Transverse colon (tissue), 4 donors: ENCODE measurements at regions of chr2 and their contacts with region 1.

Region 1: GRCh38 chr2:73071360-73072133 is at the start of gene SFXN5:
- DNase-seq: peak; percentile 99
- H3K4me3 ChIP-seq: peak within 1 kb of the TSS; percentile 70 to 94 (median 85)
- H3K27ac ChIP-seq: peak within 1 kb of the TSS; percentile 94 to 97 (median 96)
- H3K4me1 ChIP-seq: peaks cover 12 to 26% (median 20%) of the 10 kb centered on the region in 4 donors
- H3K27me3 ChIP-seq: no peaks in the 10 kb centered on the region
- CTCF ChIP-seq: peak in 3 of 5 experiments; percentile 28 to 47 (median 39)
- EP300 ChIP-seq: no peak
- POLR2A ChIP-seq: peak; percentile 82
- total RNA-seq, gene SFXN5: 12.3 to 98.4 (median 42.7) TPM

Region 2: DNA sequence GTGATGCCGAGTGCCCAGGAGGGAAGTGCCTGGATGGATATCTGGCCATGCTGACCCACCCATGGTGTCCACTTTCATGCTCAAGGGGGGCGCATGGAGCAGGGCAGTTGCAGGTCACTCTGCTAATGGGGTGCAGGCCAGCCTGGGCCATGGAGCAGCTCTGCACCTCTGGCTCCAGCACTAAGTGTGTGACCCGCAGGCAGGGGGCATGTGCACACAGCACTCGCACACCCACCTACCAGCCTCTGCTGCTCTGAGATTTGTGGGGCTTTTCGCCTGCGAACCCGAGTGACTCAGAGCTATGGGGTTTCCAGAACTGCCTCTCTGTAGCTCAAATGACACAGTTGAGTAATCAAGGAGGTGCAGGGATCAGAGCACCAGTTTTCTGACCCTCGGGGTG is 990.1 kb before region 1 on chr2:
- in situ Hi-C with region 1: no loop called
- intact Hi-C with region 1: no loop called
- DNase-seq: no peak
- H3K4me3 ChIP-seq: no peak overlapping the region
- H3K27ac ChIP-seq: no peak overlapping the region
- H3K4me1 ChIP-seq: no peaks in the 10 kb centered on the region
- H3K27me3 ChIP-seq: no peaks in the 10 kb centered on the region
- CTCF ChIP-seq: no peak
- EP300 ChIP-seq: no peak
- POLR2A ChIP-seq: no peak

Region 3: DNA sequence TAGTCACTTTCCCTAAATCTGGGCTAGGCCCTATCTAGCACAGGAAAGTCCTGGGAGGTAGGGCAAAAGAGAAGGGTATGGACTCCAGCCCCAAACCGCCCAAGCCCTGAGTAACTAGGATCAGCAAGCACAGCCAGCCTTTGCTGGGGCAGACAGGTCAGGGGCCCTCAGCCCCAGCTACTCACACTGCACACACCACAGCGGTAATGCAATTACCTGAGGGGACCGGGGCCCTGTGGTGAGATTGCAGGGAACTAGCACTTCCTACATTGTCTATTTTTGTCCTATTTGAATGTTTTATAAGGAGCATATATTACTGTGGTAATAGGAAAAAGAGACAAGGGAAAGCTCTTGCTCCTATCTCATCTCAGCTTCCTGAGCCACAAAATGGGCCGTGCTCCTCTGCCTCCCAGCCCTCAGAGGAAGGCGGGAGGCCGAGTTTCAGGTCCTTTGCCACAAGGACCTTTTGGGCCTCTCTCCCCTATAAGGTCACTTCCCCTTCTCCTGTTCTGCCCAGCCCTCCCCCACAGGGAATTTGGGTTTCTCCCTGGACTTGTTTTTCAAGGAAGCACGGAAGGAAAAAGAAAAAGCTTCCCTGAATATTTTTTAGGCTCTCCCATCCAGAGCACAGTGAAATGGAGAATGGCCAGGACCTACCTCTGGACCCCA is 20.7 kb after region 1 on chr2:
- in situ Hi-C with region 1: no loop called
- intact Hi-C with region 1: loop called (anchors 1 kb)
- DNase-seq: no peak
- H3K4me3 ChIP-seq: no peak overlapping the region
- H3K27ac ChIP-seq: no peak overlapping the region
- H3K4me1 ChIP-seq: peaks cover 0 to 4% (median 0%) of the 10 kb centered on the region in 4 donors
- H3K27me3 ChIP-seq: no peaks in the 10 kb centered on the region
- CTCF ChIP-seq: no peak
- EP300 ChIP-seq: no peak
- POLR2A ChIP-seq: no peak

Region 4: GRCh38 chr2:73114273-73114867 is 42.8 kb after region 1 on chr2:
- in situ Hi-C with region 1: no loop called
- intact Hi-C with region 1: loop called (anchors 2 kb)
- DNase-seq: no peak
- H3K4me3 ChIP-seq: no peak overlapping the region
- H3K27ac ChIP-seq: peak overlapping the region in 3 of 4 donors; percentile 81 to 92 (median 90)
- H3K4me1 ChIP-seq: peaks cover 9 to 25% (median 20%) of the 10 kb centered on the region in 4 donors
- H3K27me3 ChIP-seq: no peaks in the 10 kb centered on the region
- CTCF ChIP-seq: no peak
- EP300 ChIP-seq: no peak
- POLR2A ChIP-seq: no peak